Activated CD4-positive, alpha-beta T cell treated with anti-CD3 and anti-CD28 coated beads for 36 hours (primary cell): ENCODE measurements at regions of chr4 and their contacts with region 1.

Region 1: GRCh38 chr4:155442267-155443105 is 65.7 kb upstream of the MAP9 start:
- DNase-seq: peak; percentile 77
- ATAC-seq: peak; percentile 66
- H3K4me3 Mint-ChIP-seq: no peak overlapping the region
- H3K27ac Mint-ChIP-seq: no peak overlapping the region
- H3K4me1 Mint-ChIP-seq: no peaks in the 10 kb centered on the region
- H3K27me3 Mint-ChIP-seq: peaks cover 11% of the 10 kb centered on the region

Region 2: GRCh38 chr4:155430895-155431795 is 11.3 kb before region 1 on chr4:
- CTCF ChIA-PET with region 1: interaction called, 10 read pairs
- POLR2A ChIA-PET with region 1: no interaction called
- intact Hi-C with region 1: no loop called
- DNase-seq: no peak
- ATAC-seq: no peak
- H3K4me3 Mint-ChIP-seq: no peak overlapping the region
- H3K27ac Mint-ChIP-seq: no peak overlapping the region
- H3K4me1 Mint-ChIP-seq: no peaks in the 10 kb centered on the region
- H3K27me3 Mint-ChIP-seq: peaks cover 17% of the 10 kb centered on the region

Region 3: DNA sequence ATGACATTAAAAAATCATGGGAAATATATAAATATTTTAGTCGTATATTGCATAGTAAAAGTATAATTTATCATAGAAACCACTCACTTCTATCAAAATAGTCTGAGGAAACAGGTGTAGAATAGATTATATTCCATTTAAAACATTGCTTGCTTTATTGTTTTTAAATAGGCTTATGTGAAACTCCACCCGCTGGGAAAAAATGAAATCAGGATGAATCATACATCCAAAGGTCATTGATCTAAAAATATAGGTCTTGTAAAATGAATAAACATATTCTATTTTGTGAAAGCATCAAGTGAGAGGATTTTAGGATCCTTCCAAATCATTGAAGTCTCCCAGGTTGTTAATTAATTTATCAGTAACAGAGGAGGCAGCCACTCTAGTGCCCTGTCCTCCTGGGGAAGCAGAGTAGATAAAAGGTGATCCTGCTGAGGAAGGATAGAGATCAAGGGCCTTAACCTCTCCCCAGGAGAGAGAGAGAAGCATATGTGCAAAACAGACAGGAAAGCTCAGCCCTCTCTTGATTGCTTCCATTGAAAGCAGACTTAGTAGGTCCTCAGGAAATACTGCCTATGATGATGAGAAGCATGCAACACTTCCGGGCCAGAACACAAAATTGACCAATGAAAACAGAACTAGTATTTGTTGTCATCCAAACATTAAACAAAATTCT is 31.1 kb after region 1 on chr4:
- CTCF ChIA-PET with region 1: no interaction called
- POLR2A ChIA-PET with region 1: no interaction called
- intact Hi-C with region 1: no loop called
- DNase-seq: no peak
- ATAC-seq: no peak
- H3K4me3 Mint-ChIP-seq: no peak overlapping the region
- H3K27ac Mint-ChIP-seq: no peak overlapping the region
- H3K4me1 Mint-ChIP-seq: no peaks in the 10 kb centered on the region
- H3K27me3 Mint-ChIP-seq: peaks cover 1% of the 10 kb centered on the region